Pancreas (tissue), 10 donors: ENCODE measurements at regions of chr9 and their contacts with region 1.

Region 1: GRCh38 chr9:28064241-28064815 is 491.0 kb upstream of the C9orf72 start:
- DNase-seq: no peak
- ATAC-seq: no peak
- H3K4me3 ChIP-seq: no peak overlapping the region
- H3K27ac ChIP-seq: no peak overlapping the region
- H3K4me1 ChIP-seq: no peaks in the 10 kb centered on the region
- H3K27me3 ChIP-seq: no peaks in the 10 kb centered on the region
- CTCF ChIP-seq: no peak

Region 2: GRCh38 chr9:27726244-27727081 is 337.9 kb before region 1 on chr9:
- intact Hi-C with region 1: loop called in 1 of 3 experiments (anchors 10 kb)
- DNase-seq: peak in 3 of 6 donors; percentile 24 to 59 (median 42)
- ATAC-seq: peak; percentile 69 to 94 (median 90)
- H3K4me3 ChIP-seq: no peak overlapping the region
- H3K27ac ChIP-seq: no peak overlapping the region
- H3K4me1 ChIP-seq: no peaks in the 10 kb centered on the region
- H3K27me3 ChIP-seq: no peaks in the 10 kb centered on the region
- CTCF ChIP-seq: peak; percentile 14 to 68 (median 66)